Left lung (tissue), 14 donors: ENCODE measurements at regions of chrX and their contacts with region 1.

Region 1: GRCh38 chrX:124211312-124211942 is 121.0 kb upstream of the TEX13D start:
- DNase-seq: no peak
- ATAC-seq: peak; percentile 70
- H3K4me3 ChIP-seq: no peak overlapping the region
- H3K27ac ChIP-seq: no peak overlapping the region
- H3K4me1 ChIP-seq: no peaks in the 10 kb centered on the region
- H3K27me3 ChIP-seq: no peaks in the 10 kb centered on the region
- CTCF ChIP-seq: peak; percentile 38 to 43

Region 2: GRCh38 chrX:124378643-124379042 is 167.2 kb after region 1 on chrX:
- intact Hi-C with region 1: loop called in 1 of 2 experiments (anchors 10 kb)
- DNase-seq: no peak
- ATAC-seq: no peak
- H3K4me3 ChIP-seq: no peak overlapping the region
- H3K27ac ChIP-seq: no peak overlapping the region
- H3K4me1 ChIP-seq: no peaks in the 10 kb centered on the region
- H3K27me3 ChIP-seq: no peaks in the 10 kb centered on the region
- CTCF ChIP-seq: no peak

Region 3: GRCh38 chrX:124395145-124395880 is 183.9 kb after region 1 on chrX:
- intact Hi-C with region 1: no loop called
- DNase-seq: no peak
- ATAC-seq: no peak
- H3K4me3 ChIP-seq: no peak overlapping the region
- H3K27ac ChIP-seq: no peak overlapping the region
- H3K4me1 ChIP-seq: no peaks in the 10 kb centered on the region
- H3K27me3 ChIP-seq: no peaks in the 10 kb centered on the region
- CTCF ChIP-seq: no peak